ENCODE measurements at regions of chr22 and their contacts with region 1.

Region 1: DNA sequence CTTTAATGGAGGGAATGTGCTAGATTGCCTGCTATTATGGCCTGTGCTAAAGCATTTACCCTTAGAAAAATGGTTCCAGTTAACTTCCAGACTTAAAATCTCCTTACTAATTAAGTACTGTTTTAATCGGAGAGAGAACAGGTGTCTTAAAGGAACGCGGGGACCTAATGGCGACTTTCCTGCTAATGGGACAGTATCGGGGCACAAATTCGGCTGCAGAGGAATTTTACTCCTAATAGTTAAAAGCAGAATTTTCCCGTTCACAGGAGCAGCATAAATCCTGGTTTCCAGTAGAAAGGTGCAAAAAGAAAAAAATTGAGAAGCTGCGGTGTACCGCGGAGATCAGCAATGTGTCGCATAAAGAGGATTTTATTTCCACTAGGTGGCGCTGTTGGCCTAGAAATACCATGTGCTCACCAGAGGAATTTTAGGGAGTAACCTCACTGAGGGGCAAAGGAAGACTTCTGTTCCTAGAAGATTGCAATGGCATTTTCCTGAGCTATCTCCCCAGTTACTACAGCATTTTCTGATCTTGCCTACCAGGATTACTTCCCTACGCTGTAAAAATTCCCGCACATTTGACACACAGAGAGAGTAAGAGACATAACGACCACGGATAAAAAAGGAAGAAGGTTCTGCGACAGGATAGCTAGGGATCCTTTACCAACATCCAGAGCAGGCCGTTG is 44.5 kb downstream of the ZNF280B start:
- DNase-seq: peak; percentile 49 to 76 (median 64)
- H3K4me3 ChIP-seq: no peak overlapping the region
- H3K27ac ChIP-seq: no peak overlapping the region
- H3K4me1 ChIP-seq: no peaks in the 10 kb centered on the region
- H3K27me3 ChIP-seq: peaks cover 13% of the 10 kb centered on the region
- CTCF ChIP-seq: peak; percentile 71 to 86 (median 76)
- POLR2A ChIP-seq: no peak

Region 2: DNA sequence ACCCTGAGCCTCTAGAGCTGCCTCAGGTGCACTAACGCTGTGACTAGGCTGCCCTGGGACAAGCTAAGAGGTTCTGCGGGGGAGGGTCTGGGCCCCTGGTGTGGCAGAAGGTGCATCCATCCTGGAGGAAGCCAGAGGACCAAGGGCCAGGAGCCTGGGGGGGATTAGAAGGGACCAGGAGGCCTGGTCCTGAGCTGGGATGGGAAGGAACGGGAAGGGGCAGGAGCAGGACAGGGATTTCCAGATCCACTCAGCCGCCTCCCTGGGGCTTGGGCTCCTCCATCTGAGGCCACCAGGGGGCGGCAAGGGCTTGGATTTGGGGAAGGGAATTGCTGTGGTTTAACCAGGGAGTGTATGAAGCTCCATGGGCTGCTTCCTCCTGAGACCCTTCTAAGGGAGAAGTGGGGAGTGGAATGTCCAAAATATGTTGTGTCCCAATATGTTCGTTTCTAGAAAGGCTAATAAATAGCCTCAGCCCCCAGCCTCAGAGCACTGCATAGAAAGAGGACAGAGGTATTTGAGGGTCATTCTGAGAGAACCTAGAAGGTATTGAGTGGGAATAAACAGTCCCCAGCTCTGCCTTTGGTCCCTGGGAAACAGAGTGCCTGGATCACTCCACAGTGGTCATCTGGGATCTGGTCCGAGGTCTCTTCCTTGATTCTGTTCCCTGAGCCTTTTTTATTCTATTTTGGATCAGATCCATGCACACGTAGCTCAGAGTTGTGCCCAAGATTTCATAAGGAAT is 112.4 kb after region 1 on chr22:
- intact Hi-C with region 1: loop called in 1 of 2 experiments (anchors 10 kb)
- DNase-seq: peak; percentile 59 to 67 (median 64)
- H3K4me3 ChIP-seq: no peak overlapping the region
- H3K27ac ChIP-seq: no peak overlapping the region
- H3K4me1 ChIP-seq: no peaks in the 10 kb centered on the region
- H3K27me3 ChIP-seq: peaks cover 7% of the 10 kb centered on the region
- CTCF ChIP-seq: peak; percentile 35 to 66 (median 58)
- POLR2A ChIP-seq: no peak

Region 3: GRCh38 chr22:22687638-22688500 is 223.9 kb after region 1 on chr22:
- intact Hi-C with region 1: loop called in 1 of 2 experiments (anchors 10 kb)
- DNase-seq: peak; percentile 48 to 76 (median 60)
- H3K4me3 ChIP-seq: no peak overlapping the region
- H3K27ac ChIP-seq: no peak overlapping the region
- H3K4me1 ChIP-seq: no peaks in the 10 kb centered on the region
- H3K27me3 ChIP-seq: no peaks in the 10 kb centered on the region
- CTCF ChIP-seq: peak; percentile 56 to 85 (median 64)
- POLR2A ChIP-seq: no peak